ENCODE measurements at regions of chr18 and their contacts with region 1.

Region 1: DNA sequence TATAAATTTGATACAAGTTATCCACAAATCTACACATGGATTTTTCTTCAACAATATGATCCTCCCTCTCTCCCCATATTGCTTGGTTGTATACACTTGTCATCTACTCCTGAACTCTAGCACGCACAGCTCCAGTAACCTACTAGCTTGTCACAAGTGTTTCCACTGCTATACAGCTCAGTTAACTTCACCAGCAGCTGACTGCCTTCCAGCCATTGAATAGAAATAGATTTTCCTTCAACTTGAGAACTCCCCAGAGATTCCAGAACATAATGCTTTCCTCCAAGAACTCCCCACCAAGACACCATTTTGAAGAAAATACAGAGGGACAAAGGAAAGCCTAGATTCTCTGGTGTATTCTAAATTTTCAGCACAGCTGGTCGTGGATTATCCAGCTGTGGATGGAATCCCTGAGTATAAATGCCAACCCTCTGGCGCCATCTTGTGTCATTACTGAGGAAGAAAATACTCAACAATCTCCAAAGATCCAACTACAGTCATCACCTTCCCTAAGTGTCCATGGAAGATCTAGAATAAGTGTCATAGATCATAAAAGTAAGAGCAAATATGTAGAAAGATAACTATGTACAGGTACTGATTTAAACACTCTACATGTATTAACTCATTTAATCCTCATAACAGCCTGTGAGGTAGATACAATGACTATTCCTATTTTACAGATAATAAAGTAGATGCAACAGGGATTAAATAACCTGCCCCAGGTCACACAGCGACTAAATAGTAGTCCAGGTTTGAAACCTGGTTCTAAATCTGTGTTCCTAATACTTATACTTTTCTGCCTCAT is 156.7 kb downstream of the ARHGAP28 start:
- DNase-seq: peak; percentile 50
- H3K4me3 Mint-ChIP-seq: no peak overlapping the region
- H3K27ac Mint-ChIP-seq: no peak overlapping the region
- H3K4me1 Mint-ChIP-seq: no peaks in the 10 kb centered on the region
- H3K27me3 Mint-ChIP-seq: peaks cover 57% of the 10 kb centered on the region
- CTCF ChIP-seq: peak; percentile 51

Region 2: DNA sequence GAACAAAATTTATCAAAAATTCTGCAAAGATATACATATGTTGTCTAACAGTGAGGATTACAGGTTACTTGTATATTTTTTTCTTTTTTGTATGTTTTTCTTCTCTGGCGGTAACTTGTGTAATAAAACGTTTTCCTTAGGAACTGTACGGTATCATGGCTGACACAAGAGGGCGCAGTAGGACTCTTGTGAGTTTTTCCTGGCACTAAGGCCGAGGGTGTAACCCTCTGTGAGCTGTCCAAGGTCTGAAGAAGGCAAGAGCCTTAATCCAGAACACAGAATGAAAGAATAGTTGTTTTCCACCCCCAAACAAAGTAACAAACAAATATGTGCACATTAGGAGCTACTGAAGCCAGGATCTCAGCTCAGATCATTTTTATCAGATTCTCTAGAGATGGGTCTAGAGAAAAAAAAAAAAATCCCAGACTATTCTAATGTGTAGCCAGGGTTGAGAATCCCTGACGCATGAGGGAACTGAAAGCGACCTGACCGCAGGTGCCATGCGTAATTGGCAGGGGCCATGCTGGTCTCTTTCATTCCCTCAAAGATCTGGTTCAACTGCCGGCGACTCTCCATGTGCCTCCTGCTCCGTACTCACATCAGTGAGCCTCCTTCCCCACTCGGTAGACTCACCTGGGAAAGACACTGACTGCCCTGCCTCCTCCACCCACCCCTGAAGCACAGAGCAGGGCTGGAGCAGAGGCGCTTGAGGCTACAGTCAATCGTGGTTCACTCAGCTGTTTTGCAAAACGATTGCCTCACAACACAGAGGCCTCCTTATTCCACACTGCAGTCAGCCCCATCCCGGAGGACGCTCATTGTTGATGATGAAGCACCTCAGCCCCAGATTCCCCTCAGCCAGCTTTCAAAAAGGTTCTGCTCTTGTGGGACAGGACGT is 1017.7 kb before region 1 on chr18:
- CTCF ChIA-PET with region 1: interaction called, 3 read pairs
- intact Hi-C with region 1: loop called (anchors 5 kb)
- DNase-seq: peak; percentile 61
- H3K4me3 Mint-ChIP-seq: no peak overlapping the region
- H3K27ac Mint-ChIP-seq: no peak overlapping the region
- H3K4me1 Mint-ChIP-seq: no peaks in the 10 kb centered on the region
- H3K27me3 Mint-ChIP-seq: peaks cover 17% of the 10 kb centered on the region
- CTCF ChIP-seq: peak; percentile 46

Region 3: GRCh38 chr18:5879479-5879882 is 1006.7 kb before region 1 on chr18:
- CTCF ChIA-PET with region 1: no interaction called
- intact Hi-C with region 1: loop called (anchors 5 kb)
- DNase-seq: no peak
- H3K4me3 Mint-ChIP-seq: no peak overlapping the region
- H3K27ac Mint-ChIP-seq: no peak overlapping the region
- H3K4me1 Mint-ChIP-seq: no peaks in the 10 kb centered on the region
- H3K27me3 Mint-ChIP-seq: peaks cover 18% of the 10 kb centered on the region
- CTCF ChIP-seq: peak; percentile 68

Region 4: GRCh38 chr18:6850396-6850795 is 35.8 kb before region 1 on chr18:
- CTCF ChIA-PET with region 1: no interaction called
- intact Hi-C with region 1: no loop called
- DNase-seq: no peak
- H3K4me3 Mint-ChIP-seq: no peak overlapping the region
- H3K27ac Mint-ChIP-seq: no peak overlapping the region
- H3K4me1 Mint-ChIP-seq: no peaks in the 10 kb centered on the region
- H3K27me3 Mint-ChIP-seq: peaks cover 14% of the 10 kb centered on the region
- CTCF ChIP-seq: no peak

Measured in Calu3 (cell line).